Endothelial cell of umbilical vein (primary cell): ENCODE measurements at regions of chr17 and their contacts with region 1.

Region 1: GRCh38 chr17:35747540-35748017 is 5.5 kb downstream of the GAS2L2 start:
- DNase-seq: peak; percentile 68
- H3K4me3 ChIP-seq: no peak overlapping the region
- H3K27ac ChIP-seq: no peak overlapping the region
- H3K4me1 ChIP-seq: no peaks in the 10 kb centered on the region
- H3K27me3 ChIP-seq: peaks cover 25% of the 10 kb centered on the region in 2 experiments
- CTCF ChIP-seq: peak; percentile 67 to 83
- POLR2A ChIP-seq: no peak

Region 2: DNA sequence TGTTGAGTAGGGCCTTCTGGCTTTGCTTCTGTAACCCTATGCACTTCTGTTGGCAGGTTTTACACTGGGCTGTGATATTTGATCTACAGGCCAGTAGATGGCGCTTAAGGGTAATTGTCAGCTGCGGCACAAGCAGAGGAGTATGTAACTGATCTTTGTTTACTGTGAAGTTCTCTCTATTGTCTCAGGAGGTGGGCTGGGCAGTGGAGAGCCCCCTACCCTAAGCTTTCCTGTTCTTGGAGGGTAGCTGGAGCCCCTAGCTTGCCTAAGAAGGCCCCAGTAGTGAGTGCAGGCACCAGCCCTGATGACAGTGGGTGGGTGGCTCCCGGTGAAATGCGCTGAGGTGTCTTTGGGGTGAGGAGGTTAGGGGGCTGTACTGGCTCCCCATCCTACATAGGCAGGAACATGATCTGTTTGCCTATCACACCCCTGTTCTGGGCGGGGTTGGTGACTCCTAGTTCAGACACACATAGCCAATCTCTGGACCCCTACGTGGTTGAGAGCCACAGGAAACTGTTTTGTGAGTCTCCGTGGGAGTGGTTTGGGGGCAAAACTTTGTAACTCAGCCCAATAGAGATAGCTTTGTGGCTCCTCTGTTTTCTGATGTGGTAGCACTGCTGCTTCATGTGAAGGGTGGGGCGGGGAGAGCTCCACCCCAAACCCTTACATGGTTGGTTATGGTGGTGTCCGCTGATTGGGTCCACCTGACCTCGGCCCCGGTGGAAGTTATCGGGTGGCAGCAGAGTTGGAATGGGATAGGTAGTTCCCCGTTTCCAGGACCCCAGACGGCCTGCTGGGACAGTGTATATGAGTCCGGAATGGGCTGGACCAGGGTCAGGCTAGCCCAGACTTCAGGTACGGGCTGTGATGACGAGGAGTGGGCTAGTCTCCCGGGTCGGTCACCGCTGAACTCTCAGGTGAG is 434.5 kb before region 1 on chr17:
- CTCF ChIA-PET with region 1: interaction called, 12 read pairs
- POLR2A ChIA-PET with region 1: no interaction called
- dilution Hi-C with region 1: no loop called
- intact Hi-C with region 1: loop called (anchors 1 kb)
- DNase-seq: peak; percentile 71
- H3K4me3 ChIP-seq: no peak overlapping the region
- H3K27ac ChIP-seq: no peak overlapping the region
- H3K4me1 ChIP-seq: peaks cover 3% of the 10 kb centered on the region
- H3K27me3 ChIP-seq: no peaks in the 10 kb centered on the region
- CTCF ChIP-seq: peak; percentile 67
- POLR2A ChIP-seq: no peak

Region 3: DNA sequence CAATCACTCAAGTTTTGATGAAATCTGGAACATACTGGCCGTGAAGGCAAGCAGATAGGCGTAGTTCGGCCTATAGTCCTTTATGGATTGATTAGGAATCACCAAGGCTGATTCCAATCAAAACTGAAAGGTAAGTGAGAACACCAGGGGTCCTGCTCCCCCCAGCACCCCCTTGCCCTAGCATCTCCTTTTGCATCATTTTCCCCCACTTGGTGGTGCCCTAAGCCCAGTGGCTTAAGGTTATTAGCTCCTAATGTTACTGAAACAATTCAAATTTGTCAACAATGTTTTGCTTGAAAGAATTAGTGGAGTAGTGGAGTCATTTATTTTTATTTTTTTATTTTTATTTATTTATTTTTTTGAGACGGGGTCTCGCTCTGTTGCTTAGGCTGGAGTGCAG is 191.9 kb before region 1 on chr17:
- CTCF ChIA-PET with region 1: interaction called, 35 read pairs
- POLR2A ChIA-PET with region 1: no interaction called
- dilution Hi-C with region 1: no loop called
- intact Hi-C with region 1: loop called (anchors 1 kb)
- DNase-seq: no peak
- H3K4me3 ChIP-seq: no peak overlapping the region
- H3K27ac ChIP-seq: no peak overlapping the region
- H3K4me1 ChIP-seq: no peaks in the 10 kb centered on the region
- H3K27me3 ChIP-seq: peaks cover 23 to 36% of the 10 kb centered on the region in 2 experiments
- CTCF ChIP-seq: peak; percentile 7 to 27
- POLR2A ChIP-seq: no peak

Region 4: GRCh38 chr17:35612924-35613521 is 134.6 kb before region 1 on chr17:
- CTCF ChIA-PET with region 1: interaction called, 270 read pairs
- POLR2A ChIA-PET with region 1: interaction called, 4 read pairs
- dilution Hi-C with region 1: loop called (anchors 25 kb)
- intact Hi-C with region 1: loop called (anchors 1 kb)
- DNase-seq: peak; percentile 71
- H3K4me3 ChIP-seq: no peak overlapping the region
- H3K27ac ChIP-seq: no peak overlapping the region
- H3K4me1 ChIP-seq: peaks cover 5% of the 10 kb centered on the region
- H3K27me3 ChIP-seq: no peaks in the 10 kb centered on the region
- CTCF ChIP-seq: peak; percentile 53 to 57
- POLR2A ChIP-seq: no peak

Region 5: DNA sequence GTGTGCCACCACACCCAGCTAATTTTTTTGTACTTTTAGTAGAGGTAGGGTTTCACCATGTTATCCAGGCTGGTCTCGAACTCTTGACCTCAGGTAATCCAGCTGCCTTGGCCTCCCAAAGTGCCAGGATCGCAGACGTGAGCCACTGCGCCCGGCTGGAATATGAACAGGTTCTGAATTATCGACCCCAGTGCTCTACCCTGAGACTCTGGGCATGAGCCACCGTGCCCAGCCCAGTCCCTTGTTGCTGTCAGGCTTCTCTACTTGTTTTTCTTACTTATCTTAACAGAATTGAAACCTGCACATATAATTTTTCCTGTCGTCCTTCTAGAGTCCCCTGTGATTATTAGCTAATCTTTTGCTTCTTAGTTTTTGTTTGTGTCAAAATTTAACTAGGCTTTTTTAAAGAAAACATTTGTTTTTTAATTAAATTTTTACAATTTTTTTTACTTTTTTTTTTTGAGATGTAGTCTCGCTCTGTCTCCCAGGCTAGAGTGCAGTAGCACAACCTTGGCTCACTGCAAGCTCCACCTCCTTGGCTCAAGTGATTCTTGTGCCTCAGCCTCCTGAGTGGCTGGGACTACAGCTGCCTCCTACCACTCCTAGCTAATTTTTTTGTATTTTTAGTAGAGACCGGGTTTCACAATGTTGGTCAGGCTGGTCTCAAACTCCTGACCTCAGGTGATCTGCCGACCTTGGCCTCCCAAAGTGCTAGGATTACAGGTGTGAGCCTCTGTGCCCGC is 93.8 kb before region 1 on chr17:
- CTCF ChIA-PET with region 1: interaction called, 10 read pairs
- POLR2A ChIA-PET with region 1: no interaction called
- dilution Hi-C with region 1: no loop called
- intact Hi-C with region 1: no loop called
- DNase-seq: no peak
- H3K4me3 ChIP-seq: no peak overlapping the region
- H3K27ac ChIP-seq: no peak overlapping the region
- H3K4me1 ChIP-seq: no peaks in the 10 kb centered on the region
- H3K27me3 ChIP-seq: no peaks in the 10 kb centered on the region
- CTCF ChIP-seq: no peak
- POLR2A ChIP-seq: no peak

Region 6: DNA sequence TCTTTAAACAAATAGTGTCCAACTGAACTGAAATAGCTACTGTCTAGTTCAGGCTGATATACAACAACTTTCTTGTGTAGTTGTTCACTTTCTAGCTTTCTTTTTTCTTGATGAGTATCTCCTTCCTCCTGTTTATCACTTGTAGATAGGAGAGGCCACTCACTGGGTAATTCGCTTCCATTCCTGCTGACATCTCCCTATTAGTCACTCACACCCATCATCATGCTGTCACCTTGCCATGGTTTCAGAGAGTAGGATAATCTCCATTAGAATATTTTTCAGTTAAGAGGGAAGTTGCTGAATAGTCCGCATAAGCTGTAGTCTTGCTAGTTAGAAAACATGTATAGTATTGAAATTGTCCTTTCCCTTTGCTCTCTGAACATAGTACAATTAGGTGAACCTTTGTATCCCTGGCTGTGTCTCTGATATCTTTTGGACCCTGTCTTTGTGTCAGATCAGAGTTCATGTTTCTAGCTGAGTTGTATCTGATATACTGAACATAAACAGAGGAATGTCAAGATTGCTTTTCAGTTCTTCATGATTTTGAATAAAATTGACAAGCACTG is 80.5 kb before region 1 on chr17:
- CTCF ChIA-PET with region 1: interaction called, 12 read pairs
- POLR2A ChIA-PET with region 1: no interaction called
- dilution Hi-C with region 1: no loop called
- intact Hi-C with region 1: no loop called
- DNase-seq: peak; percentile 3
- H3K4me3 ChIP-seq: no peak overlapping the region
- H3K27ac ChIP-seq: no peak overlapping the region
- H3K4me1 ChIP-seq: no peaks in the 10 kb centered on the region
- H3K27me3 ChIP-seq: no peaks in the 10 kb centered on the region
- CTCF ChIP-seq: no peak
- POLR2A ChIP-seq: no peak

Region 7: DNA sequence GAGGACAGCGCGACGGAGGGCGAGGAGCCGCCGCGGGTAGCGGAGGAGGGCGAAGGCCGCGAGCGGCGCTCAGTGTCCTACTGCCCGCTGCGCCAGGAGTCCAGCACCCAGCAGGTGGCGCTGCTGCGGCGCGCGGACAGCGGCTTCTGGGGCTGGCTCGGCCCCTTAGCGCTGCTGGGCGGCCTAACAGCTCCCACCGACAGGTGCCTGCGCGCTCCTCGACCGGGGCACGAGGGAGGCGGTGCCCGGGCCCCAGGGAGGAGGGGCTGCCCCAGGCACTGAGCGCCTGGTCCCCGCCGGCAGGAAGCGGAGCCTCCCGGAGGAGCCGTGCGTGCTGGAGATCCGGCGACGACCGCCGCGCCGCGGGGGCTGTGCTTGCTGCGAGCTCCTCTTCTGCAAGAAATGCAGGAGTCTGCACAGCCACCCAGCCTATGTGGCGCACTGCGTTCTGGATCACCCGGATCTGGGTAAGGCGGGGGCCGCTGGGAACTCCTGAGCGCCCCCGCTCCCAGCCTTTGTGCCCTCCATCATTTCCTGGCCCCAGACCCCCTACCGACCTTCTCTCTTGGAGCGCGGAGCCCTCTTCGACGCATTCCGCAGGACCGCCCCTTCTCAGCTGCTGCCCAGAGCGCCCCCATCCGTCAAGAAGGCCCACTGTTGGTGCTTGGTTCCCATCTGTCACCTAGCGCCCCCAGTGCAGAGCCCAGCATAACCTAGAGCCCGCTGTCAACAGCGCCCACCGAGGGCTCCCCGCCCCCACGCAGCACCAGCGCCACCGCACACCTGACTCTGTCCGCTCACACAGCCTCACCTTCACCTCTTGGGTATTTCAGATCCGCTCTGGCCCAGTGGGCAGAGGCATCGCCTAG is 16.8 kb after region 1 on chr17:
- CTCF ChIA-PET with region 1: interaction called, 51 read pairs
- POLR2A ChIA-PET with region 1: no interaction called
- dilution Hi-C with region 1: no loop called
- intact Hi-C with region 1: no loop called
- DNase-seq: peak; percentile 90
- H3K4me3 ChIP-seq: peak overlapping the region; percentile 19 to 50 (median 36)
- H3K27ac ChIP-seq: no peak overlapping the region
- H3K4me1 ChIP-seq: peaks cover 7% of the 10 kb centered on the region
- H3K27me3 ChIP-seq: peaks cover 1 to 2% of the 10 kb centered on the region in 2 experiments
- CTCF ChIP-seq: peak; percentile 98 to 99
- POLR2A ChIP-seq: peak; percentile 49

Region 8: GRCh38 chr17:35856603-35857002 is 109.0 kb after region 1 on chr17:
- CTCF ChIA-PET with region 1: no interaction called
- POLR2A ChIA-PET with region 1: no interaction called
- dilution Hi-C with region 1: no loop called
- intact Hi-C with region 1: no loop called
- DNase-seq: no peak
- H3K4me3 ChIP-seq: no peak overlapping the region
- H3K27ac ChIP-seq: no peak overlapping the region
- H3K4me1 ChIP-seq: no peaks in the 10 kb centered on the region
- H3K27me3 ChIP-seq: no peaks in the 10 kb centered on the region
- CTCF ChIP-seq: no peak
- POLR2A ChIP-seq: no peak

Region 9: DNA sequence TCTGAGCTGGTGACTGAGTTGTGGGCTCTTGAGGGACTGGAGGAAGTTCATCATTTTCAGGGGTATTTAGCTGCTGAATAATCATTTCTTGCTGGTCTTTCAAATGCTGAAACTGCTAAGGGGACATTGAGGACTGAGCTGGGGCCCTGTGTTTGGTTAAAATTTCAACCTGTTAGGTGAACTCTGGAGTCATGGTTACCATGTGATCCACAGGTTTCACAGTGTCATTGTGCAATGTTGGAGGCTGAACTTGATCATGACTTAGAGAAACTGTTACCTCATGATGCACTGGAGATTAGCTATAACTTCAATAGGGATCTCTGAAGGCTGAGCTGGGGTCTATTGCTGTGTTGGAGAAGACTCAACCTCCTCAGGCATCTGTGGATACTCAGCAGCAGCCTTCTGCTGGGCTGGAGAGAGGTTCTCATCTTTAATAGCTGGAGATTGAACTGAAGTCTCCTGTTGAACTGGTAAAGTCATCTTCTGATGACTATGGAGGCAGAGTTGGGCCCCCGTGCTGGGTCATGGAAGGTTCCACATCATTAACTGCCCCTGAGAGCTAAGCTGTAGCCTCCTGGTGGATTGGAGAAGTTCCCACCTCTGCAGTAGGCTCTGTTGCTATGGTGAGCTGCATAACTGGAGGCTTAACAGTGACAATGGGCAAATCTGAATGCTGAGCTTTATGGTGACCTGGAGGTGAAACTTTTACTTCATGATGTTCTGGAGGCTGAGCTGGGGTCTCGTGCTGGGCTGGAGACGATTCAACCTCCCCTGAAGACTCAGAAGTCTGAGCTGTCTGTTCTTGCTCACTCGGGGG is 167.8 kb after region 1 on chr17:
- CTCF ChIA-PET with region 1: no interaction called
- POLR2A ChIA-PET with region 1: no interaction called
- dilution Hi-C with region 1: no loop called
- intact Hi-C with region 1: no loop called
- DNase-seq: no peak
- H3K4me3 ChIP-seq: no peak overlapping the region
- H3K27ac ChIP-seq: no peak overlapping the region
- H3K4me1 ChIP-seq: peaks cover 4% of the 10 kb centered on the region
- H3K27me3 ChIP-seq: peaks cover 0 to 2% of the 10 kb centered on the region in 2 experiments
- CTCF ChIP-seq: no peak
- POLR2A ChIP-seq: no peak